ENCODE measurements at regions of chr10 and their contacts with region 1.

Region 1: DNA sequence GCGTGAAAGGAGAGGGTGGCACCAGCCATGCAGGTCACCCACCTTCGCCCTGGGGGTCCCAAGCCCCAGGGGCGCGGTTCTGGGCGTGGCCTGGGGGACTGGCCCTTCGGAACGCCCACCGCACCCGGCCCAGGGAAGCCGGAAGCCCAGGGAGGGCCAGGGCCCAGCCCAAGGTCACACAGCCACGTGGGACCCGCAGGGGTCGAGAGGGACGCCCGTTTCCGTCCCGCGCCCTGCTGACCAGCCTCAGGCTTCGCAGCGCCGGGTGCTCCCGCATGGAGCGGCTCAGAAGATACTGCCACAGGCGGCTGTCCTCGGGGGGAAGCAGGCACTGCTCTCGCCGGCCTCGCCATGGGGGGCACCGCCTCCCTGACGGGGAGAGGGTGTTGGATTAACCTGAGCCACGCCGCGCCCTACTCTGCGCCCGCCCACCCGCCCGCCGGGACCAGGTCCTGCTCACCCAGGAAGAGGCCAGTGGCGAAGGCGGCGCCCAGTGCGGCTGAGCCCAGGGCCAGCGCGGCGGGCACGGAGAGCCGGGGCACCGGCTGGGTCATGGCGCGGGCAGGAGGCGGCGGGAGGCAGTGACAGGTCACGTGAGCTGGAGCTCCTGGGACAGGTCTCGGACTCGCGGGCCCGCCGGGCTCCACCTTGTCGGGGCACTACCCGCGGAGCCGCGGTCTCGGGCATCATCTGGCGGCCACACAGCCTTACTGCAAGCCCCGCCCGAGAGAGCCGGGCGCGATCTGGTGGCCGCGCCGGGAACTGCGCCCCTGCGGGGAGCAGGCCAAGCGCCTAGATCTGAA is at the start of gene COMTD1:
- DNase-seq: peak; percentile 86 to 97 (median 92)

Region 2: DNA sequence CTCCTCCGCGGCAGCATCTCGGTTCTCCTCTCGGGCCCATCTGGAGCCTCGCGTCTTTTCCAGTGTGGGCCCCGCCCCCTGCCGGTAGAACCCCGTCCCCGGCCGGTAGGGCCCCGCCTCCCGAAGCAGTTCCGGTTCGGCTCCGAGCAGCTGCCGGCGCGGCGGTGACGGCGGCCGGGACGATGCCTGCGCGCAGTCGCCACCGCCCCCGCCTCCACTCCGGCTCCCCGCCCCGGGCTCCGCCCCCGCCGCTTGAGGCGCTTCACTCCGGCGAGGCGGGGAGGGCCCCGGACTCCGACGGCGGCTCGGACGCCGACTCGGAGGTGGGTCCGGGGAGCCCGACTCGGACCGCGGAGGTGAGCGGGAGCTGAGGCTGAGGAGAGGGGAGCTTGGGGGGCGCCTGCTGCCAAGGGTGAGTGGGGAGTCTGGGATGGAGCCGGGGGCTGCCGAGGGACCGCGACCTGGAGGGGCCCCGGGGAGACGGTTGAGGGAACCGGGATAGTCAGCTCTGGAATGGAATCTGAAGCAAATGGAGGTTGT is 124.1 kb before region 1 on chr10 and contains the start of gene SAMD8:
- intact Hi-C with region 1: loop called (anchors 5 kb)
- DNase-seq: peak; percentile 87 to 98 (median 95)

Region 3: DNA sequence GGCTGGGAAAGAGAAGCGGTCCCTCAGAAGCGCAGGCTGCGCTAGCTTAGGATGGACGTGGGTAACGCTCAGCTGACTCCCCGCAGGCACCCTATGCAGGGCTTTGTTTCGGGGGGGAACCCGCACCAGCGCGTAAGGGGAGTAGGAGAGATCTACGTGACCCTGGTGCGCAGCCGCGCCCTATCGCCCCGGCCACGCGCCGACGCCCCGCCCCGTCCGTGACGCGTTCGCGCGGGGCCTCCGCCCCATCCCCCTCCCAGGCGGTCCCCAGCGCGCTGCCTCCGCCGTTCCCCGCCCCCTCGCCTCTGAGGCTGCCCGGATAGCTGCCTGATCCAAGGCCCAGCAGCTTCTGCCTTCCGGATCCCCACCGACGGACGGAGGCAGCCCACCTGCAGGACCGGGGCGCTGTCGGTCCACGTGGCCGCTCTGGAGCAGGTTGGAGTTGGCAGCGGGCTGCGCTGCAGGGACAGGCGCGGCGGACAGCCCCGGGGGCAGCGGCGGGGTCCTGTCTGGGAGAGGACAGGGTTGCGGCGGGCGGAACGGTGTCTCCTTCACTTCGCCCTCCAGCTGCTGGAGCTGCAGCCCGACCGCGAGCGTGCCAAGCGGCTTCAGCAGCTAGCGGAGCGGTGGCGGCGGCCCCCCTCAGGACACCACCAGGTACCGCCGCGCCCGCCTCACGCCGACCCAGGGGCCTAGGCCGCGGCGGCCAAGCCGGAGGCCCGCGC is 25.1 kb before region 1 on chr10 and contains the start of gene VDAC2:
- intact Hi-C with region 1: loop called (anchors 2 kb)
- DNase-seq: peak; percentile 73 to 97 (median 93)